Calu3 (cell line): ENCODE measurements at regions of chr12 and their contacts with region 1.

Region 1: GRCh38 chr12:89140602-89141238 is 211.6 kb downstream of the DUSP6 start:
- DNase-seq: no peak
- H3K4me3 Mint-ChIP-seq: no peak overlapping the region
- H3K27ac Mint-ChIP-seq: no peak overlapping the region
- H3K4me1 Mint-ChIP-seq: peaks cover 8% of the 10 kb centered on the region
- H3K27me3 Mint-ChIP-seq: no peaks in the 10 kb centered on the region
- CTCF ChIP-seq: no peak

Region 2: DNA sequence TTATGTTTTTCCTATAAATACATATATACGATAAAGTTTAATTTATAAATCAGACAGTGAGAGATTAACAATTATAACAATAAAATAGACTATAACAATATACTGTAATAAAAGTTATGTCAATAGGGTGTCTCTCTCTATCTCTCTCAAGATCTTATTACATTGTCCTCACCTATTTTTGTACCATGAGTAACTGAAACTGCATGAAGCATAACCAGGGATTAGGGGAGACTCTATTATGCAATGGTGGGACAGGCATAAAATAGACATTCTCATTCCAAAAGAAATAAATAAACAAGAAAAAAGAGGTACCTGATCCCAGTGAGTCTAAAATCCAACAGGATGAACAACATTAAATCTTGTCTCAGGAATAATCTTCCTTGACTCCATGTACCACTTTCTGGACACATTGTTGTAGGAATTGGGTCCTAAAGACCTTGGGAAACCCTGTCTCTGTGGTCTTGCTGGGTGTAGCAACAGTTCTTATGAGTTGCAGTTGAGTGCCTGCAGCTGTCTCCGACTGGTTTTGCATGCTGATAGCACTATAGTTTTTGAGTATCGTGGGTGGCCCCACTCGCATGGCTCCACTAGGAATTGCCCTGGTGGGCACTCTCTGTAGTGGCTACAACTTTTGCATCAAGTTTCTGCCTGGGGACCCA is 765.3 kb before region 1 on chr12:
- CTCF ChIA-PET with region 1: no interaction called
- intact Hi-C with region 1: no loop called
- DNase-seq: no peak
- H3K4me3 Mint-ChIP-seq: no peak overlapping the region
- H3K27ac Mint-ChIP-seq: no peak overlapping the region
- H3K4me1 Mint-ChIP-seq: no peaks in the 10 kb centered on the region
- H3K27me3 Mint-ChIP-seq: no peaks in the 10 kb centered on the region
- CTCF ChIP-seq: no peak

Region 3: GRCh38 chr12:88844423-88844822 is 296.3 kb before region 1 on chr12:
- CTCF ChIA-PET with region 1: no interaction called
- intact Hi-C with region 1: no loop called
- DNase-seq: no peak
- H3K4me3 Mint-ChIP-seq: no peak overlapping the region
- H3K27ac Mint-ChIP-seq: no peak overlapping the region
- H3K4me1 Mint-ChIP-seq: no peaks in the 10 kb centered on the region
- H3K27me3 Mint-ChIP-seq: no peaks in the 10 kb centered on the region
- CTCF ChIP-seq: no peak

Region 4: GRCh38 chr12:89098441-89099112 is 42.1 kb before region 1 on chr12:
- CTCF ChIA-PET with region 1: no interaction called
- intact Hi-C with region 1: no loop called
- DNase-seq: no peak
- H3K4me3 Mint-ChIP-seq: no peak overlapping the region
- H3K27ac Mint-ChIP-seq: no peak overlapping the region
- H3K4me1 Mint-ChIP-seq: no peaks in the 10 kb centered on the region
- H3K27me3 Mint-ChIP-seq: no peaks in the 10 kb centered on the region
- CTCF ChIP-seq: no peak

Region 5: DNA sequence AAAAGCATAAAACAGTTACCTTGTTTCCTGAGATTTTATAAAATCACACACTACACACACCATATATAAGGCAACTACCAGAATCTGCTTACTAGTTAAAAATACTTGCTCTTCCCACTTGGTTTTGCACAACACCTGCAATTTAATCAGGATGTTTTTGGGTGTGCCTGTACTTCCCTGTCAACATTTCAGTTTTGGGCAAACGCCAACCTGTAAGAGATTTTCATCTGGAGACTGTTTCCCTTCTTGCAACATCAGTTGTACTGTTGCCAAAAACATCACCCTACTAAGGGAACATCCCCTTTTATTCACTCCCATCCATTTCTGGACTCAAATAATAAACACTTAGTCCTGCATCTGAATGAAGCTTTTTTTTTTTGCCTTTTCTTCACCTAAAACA is 39.3 kb after region 1 on chr12:
- CTCF ChIA-PET with region 1: no interaction called
- intact Hi-C with region 1: loop called (anchors 5 kb)
- DNase-seq: peak; percentile 71
- H3K4me3 Mint-ChIP-seq: peak overlapping the region; percentile 3
- H3K27ac Mint-ChIP-seq: peak overlapping the region; percentile 40
- H3K4me1 Mint-ChIP-seq: peaks cover 32% of the 10 kb centered on the region
- H3K27me3 Mint-ChIP-seq: no peaks in the 10 kb centered on the region
- CTCF ChIP-seq: no peak